Mucosa of descending colon (tissue), 3 donors: ENCODE measurements at regions of chr1 and their contacts with region 1.

Region 1: DNA sequence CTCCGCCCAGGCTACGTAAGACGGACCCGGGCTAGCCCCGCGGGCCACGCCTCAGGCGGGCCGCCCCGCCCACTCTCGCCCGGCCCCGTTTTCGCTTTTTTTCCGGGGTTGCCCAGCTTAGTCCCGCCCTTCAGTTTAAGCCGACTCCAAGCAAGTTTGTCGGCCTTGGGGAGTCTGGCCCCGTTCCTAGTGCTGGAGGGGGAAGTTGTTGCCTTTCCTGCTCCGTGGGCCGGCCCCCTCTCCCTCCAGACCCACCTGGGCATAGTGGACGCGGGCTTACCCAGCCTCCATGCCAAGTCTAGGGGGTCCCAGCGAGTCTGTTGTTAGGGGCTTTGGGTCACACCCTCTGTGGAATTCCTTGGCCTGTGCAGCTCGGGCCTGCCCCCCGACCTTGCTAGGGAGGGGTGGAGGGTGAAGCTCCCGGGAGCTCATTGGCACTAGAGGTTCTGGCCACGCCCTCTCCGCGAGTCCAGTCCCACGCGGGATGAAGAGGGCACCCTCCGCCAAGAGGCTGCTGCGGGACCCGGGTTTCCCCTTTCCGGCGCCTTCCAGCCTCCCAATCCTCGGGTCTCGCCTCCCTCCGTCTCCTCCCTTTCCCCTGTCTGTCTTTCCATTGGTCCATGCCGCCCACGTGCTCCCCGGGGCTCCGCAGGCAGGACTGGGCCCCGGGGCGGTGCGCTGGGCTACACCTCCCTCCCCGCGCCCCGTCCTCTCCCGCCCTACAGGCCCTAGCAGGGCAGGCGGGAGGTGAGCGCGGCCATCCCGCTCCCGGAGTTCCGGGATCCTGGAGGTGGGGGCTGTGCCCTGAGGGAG is 3.3 kb downstream of the RUSC1 start:
- DNase-seq: peak; percentile 94 to 98 (median 96)
- ATAC-seq: peak; percentile 80
- H3K4me3 ChIP-seq: peak overlapping the region; percentile 76
- H3K4me1 ChIP-seq: peaks cover 41% of the 10 kb centered on the region
- CTCF ChIP-seq: no peak

Region 2: GRCh38 chr1:155250633-155251449 is 73.2 kb before region 1 on chr1:
- intact Hi-C with region 1: loop called in 1 of 2 experiments (anchors 10 kb)
- DNase-seq: peak; percentile 94 to 96 (median 96)
- ATAC-seq: peak; percentile 90
- H3K4me3 ChIP-seq: no peak overlapping the region
- H3K4me1 ChIP-seq: peaks cover 10% of the 10 kb centered on the region
- CTCF ChIP-seq: peak; percentile 99

Region 3: GRCh38 chr1:155277070-155277895 is 46.7 kb before region 1 on chr1 and contains the start of gene HCN3:
- intact Hi-C with region 1: loop called in 1 of 2 experiments (anchors 10 kb)
- DNase-seq: peak; percentile 98 to 100 (median 99)
- ATAC-seq: peak; percentile 85
- H3K4me3 ChIP-seq: peak within 1 kb of the TSS; percentile 46
- H3K4me1 ChIP-seq: peaks cover 13% of the 10 kb centered on the region
- CTCF ChIP-seq: peak; percentile 80
- total RNA-seq, gene HCN3: 10.3 to 15.6 (median 10.8) TPM